Caco-2 (cell line): ENCODE measurements at regions of chr4 and their contacts with region 1.

Region 1: GRCh38 chr4:113645771-113646441 is 115.6 kb downstream of the CAMK2D start:
- DNase-seq: peak; percentile 79 to 83
- H3K4me3 ChIP-seq: no peak overlapping the region
- H3K4me3 Mint-ChIP-seq: peak overlapping the region; percentile 54
- H3K27ac Mint-ChIP-seq: peak overlapping the region; percentile 92
- H3K4me1 ChIP-seq: peaks cover 70% of the 10 kb centered on the region
- H3K4me1 Mint-ChIP-seq: peaks cover 49% of the 10 kb centered on the region
- H3K27me3 ChIP-seq: no peaks in the 10 kb centered on the region
- H3K27me3 Mint-ChIP-seq: no peaks in the 10 kb centered on the region
- CTCF ChIP-seq: no peak

Region 2: GRCh38 chr4:113659127-113659526 is 13.2 kb after region 1 on chr4:
- CTCF ChIA-PET with region 1: no interaction called
- POLR2A ChIA-PET with region 1: no interaction called
- intact Hi-C with region 1: loop called (anchors 1 kb)
- DNase-seq: no peak
- H3K4me3 ChIP-seq: no peak overlapping the region
- H3K4me3 Mint-ChIP-seq: no peak overlapping the region
- H3K27ac Mint-ChIP-seq: peak overlapping the region; percentile 39
- H3K4me1 ChIP-seq: peaks cover 46% of the 10 kb centered on the region
- H3K4me1 Mint-ChIP-seq: peaks cover 27% of the 10 kb centered on the region
- H3K27me3 ChIP-seq: no peaks in the 10 kb centered on the region
- H3K27me3 Mint-ChIP-seq: no peaks in the 10 kb centered on the region
- CTCF ChIP-seq: no peak

Region 3: DNA sequence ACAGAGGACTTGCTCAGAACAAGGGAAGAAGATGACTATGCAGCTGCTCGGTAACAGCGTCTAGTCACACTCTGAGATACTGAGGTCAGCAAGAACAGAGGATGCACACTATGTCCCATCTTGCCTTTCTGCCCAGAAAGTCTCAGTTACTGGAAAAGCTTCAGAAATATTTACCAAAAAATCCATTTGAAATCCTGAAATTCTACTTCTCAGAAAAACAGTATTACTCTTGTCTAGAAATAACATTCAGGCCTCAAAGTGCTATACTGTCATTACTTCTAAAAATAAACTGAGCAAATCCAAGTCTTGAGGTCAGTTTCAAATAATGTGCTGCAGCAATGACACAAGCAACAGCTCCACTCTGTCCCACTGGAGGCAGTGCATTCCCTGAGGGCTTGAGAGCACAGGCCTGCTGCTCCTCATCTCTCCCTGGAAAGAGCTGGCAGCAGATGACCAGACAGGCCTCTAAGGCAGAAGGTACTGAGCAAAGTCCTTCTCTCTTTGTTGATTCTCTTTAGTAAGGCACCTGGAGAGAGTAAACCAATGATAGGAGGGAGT is 38.7 kb after region 1 on chr4:
- CTCF ChIA-PET with region 1: no interaction called
- POLR2A ChIA-PET with region 1: no interaction called
- intact Hi-C with region 1: loop called (anchors 1 kb)
- DNase-seq: peak; percentile 76 to 89
- H3K4me3 ChIP-seq: no peak overlapping the region
- H3K4me3 Mint-ChIP-seq: no peak overlapping the region
- H3K27ac Mint-ChIP-seq: no peak overlapping the region
- H3K4me1 ChIP-seq: peaks cover 52% of the 10 kb centered on the region
- H3K4me1 Mint-ChIP-seq: peaks cover 47% of the 10 kb centered on the region
- H3K27me3 ChIP-seq: no peaks in the 10 kb centered on the region
- H3K27me3 Mint-ChIP-seq: no peaks in the 10 kb centered on the region
- CTCF ChIP-seq: peak; percentile 31 to 46